CD4-positive, alpha-beta T cell (primary cell): ENCODE measurements at regions of chr14 and their contacts with region 1.

Region 1: GRCh38 chr14:56474419-56475022 is 105.1 kb upstream of the TMEM260 start:
- DNase-seq: peak in 4 of 14 experiments; percentile 8 to 64 (median 48)
- ATAC-seq: peak; percentile 48
- H3K4me3 ChIP-seq: no peak overlapping the region
- H3K4me3 Mint-ChIP-seq: no peak overlapping the region
- H3K27ac ChIP-seq: no peak overlapping the region
- H3K27ac Mint-ChIP-seq: no peak overlapping the region
- H3K4me1 ChIP-seq: no peaks in the 10 kb centered on the region
- H3K4me1 Mint-ChIP-seq: no peaks in the 10 kb centered on the region
- H3K27me3 ChIP-seq: no peaks in the 10 kb centered on the region
- H3K27me3 Mint-ChIP-seq: peaks cover 10% of the 10 kb centered on the region
- CTCF ChIP-seq: peak; percentile 75

Region 2: GRCh38 chr14:55085060-55085660 is 1389.4 kb before region 1 on chr14:
- CTCF ChIA-PET with region 1: no interaction called
- POLR2A ChIA-PET with region 1: no interaction called
- intact Hi-C with region 1: loop called (anchors 10 kb)
- DNase-seq: no peak
- ATAC-seq: no peak
- H3K4me3 ChIP-seq: no peak overlapping the region
- H3K4me3 Mint-ChIP-seq: no peak overlapping the region
- H3K27ac ChIP-seq: no peak overlapping the region
- H3K27ac Mint-ChIP-seq: no peak overlapping the region
- H3K4me1 ChIP-seq: peaks cover 4% of the 10 kb centered on the region
- H3K4me1 Mint-ChIP-seq: peaks cover 4% of the 10 kb centered on the region
- H3K27me3 ChIP-seq: no peaks in the 10 kb centered on the region
- H3K27me3 Mint-ChIP-seq: no peaks in the 10 kb centered on the region
- CTCF ChIP-seq: no peak

Region 3: DNA sequence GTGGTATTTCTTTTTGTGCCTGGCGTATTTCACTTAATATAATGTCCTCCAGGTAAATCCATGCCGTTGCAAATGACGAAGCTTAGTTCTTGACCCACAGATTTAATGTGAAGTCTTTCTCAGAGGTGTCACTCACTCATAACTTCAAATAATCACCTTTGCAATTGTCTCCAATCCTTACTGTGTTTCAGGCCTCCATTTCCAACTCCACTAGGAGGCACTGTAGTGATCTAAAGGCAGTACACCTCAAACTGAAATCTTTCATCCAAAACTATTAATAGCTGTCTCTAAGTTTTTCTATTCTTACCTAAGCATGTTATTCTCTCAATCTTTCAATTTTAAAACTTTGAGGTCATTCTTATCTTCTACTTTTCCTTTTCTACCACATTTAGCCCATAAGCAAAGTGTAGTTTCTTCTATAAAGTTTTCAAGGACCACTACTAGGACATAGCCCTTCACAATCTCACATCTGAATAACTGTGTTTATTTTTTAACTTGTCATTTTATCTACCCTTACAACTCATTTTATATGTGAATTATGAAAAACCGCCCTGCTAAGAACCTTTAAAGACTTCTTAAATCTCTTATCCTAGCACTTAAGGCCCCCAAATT is 1228.8 kb before region 1 on chr14:
- CTCF ChIA-PET with region 1: no interaction called
- POLR2A ChIA-PET with region 1: no interaction called
- intact Hi-C with region 1: loop called (anchors 10 kb)
- DNase-seq: peak in 8 of 14 experiments; percentile 8 to 70 (median 32)
- ATAC-seq: peak; percentile 76
- H3K4me3 ChIP-seq: no peak overlapping the region
- H3K4me3 Mint-ChIP-seq: no peak overlapping the region
- H3K27ac ChIP-seq: no peak overlapping the region
- H3K27ac Mint-ChIP-seq: no peak overlapping the region
- H3K4me1 ChIP-seq: no peaks in the 10 kb centered on the region
- H3K4me1 Mint-ChIP-seq: no peaks in the 10 kb centered on the region
- H3K27me3 ChIP-seq: peaks cover 0 to 5% of the 10 kb centered on the region in 2 experiments
- H3K27me3 Mint-ChIP-seq: peaks cover 38% of the 10 kb centered on the region
- CTCF ChIP-seq: peak; percentile 68

Region 4: DNA sequence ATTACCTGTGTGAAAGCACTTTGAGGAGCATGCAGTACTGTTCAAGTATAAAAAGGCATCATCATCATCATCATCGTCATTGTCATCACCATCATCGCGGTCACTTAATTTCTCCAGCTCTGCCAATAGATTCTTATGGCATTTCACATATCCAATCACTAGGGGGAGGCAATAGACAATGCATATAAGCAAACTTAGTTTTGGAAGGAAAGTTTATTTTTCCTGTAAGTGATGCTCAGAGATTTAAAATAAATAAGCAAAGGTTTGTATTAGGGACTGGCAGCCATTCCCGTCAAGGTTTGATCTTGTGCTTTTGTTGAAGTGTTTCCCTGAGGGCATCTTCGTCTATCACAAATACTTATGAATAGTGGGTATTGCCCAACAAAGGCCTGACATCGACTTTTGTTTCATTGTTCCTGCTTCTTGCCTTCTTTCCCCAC is 767.1 kb before region 1 on chr14:
- CTCF ChIA-PET with region 1: interaction called, 4 read pairs
- POLR2A ChIA-PET with region 1: no interaction called
- intact Hi-C with region 1: loop called (anchors 2 to 10 kb)
- DNase-seq: peak in 3 of 14 experiments; percentile 22 to 34 (median 34)
- ATAC-seq: no peak
- H3K4me3 ChIP-seq: no peak overlapping the region
- H3K4me3 Mint-ChIP-seq: no peak overlapping the region
- H3K27ac ChIP-seq: no peak overlapping the region
- H3K27ac Mint-ChIP-seq: no peak overlapping the region
- H3K4me1 ChIP-seq: no peaks in the 10 kb centered on the region
- H3K4me1 Mint-ChIP-seq: no peaks in the 10 kb centered on the region
- H3K27me3 ChIP-seq: no peaks in the 10 kb centered on the region
- H3K27me3 Mint-ChIP-seq: no peaks in the 10 kb centered on the region
- CTCF ChIP-seq: peak; percentile 44

Region 5: GRCh38 chr14:55864890-55865655 is 609.4 kb before region 1 on chr14:
- CTCF ChIA-PET with region 1: no interaction called
- POLR2A ChIA-PET with region 1: no interaction called
- intact Hi-C with region 1: loop called in 1 of 2 experiments (anchors 10 kb)
- DNase-seq: peak in 1 of 14 experiments; percentile 2
- ATAC-seq: no peak
- H3K4me3 ChIP-seq: no peak overlapping the region
- H3K4me3 Mint-ChIP-seq: no peak overlapping the region
- H3K27ac ChIP-seq: no peak overlapping the region
- H3K27ac Mint-ChIP-seq: no peak overlapping the region
- H3K4me1 ChIP-seq: no peaks in the 10 kb centered on the region
- H3K4me1 Mint-ChIP-seq: no peaks in the 10 kb centered on the region
- H3K27me3 ChIP-seq: no peaks in the 10 kb centered on the region
- H3K27me3 Mint-ChIP-seq: peaks cover 4% of the 10 kb centered on the region
- CTCF ChIP-seq: no peak